Activated B cell treated with CpG ODN at 0.5 μM for 24 hours (primary cell): ENCODE measurements at regions of chr2 and their contacts with region 1.

Region 1: DNA sequence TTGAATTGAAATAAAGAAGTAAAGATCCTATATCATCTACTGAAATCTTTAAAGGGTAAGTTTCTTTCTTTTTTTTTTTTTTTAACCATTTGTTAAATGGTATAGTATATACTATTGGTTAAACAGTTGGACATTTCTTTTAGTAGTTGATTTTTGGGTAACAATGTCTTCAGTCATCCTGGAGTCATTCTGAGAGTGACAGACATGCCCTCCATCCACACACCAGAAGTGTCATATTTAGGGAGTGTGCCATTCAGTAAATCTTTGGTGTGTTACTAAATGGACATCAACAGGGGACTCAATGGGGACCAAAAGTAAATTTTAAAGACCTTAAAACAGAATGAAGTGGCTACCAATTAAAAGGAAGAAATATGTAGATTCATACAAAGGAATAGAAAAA is 50.8 kb upstream of the SLC39A10 start:
- DNase-seq: no peak
- ATAC-seq: no peak
- H3K4me3 Mint-ChIP-seq: no peak overlapping the region
- H3K27ac Mint-ChIP-seq: no peak overlapping the region
- H3K4me1 Mint-ChIP-seq: peaks cover 36% of the 10 kb centered on the region
- H3K27me3 Mint-ChIP-seq: no peaks in the 10 kb centered on the region
- CTCF ChIP-seq: no peak

Region 2: GRCh38 chr2:195586062-195586714 is 20.0 kb before region 1 on chr2:
- CTCF ChIA-PET with region 1: no interaction called
- POLR2A ChIA-PET with region 1: no interaction called
- intact Hi-C with region 1: loop called (anchors 2 kb)
- DNase-seq: no peak
- ATAC-seq: no peak
- H3K4me3 Mint-ChIP-seq: no peak overlapping the region
- H3K27ac Mint-ChIP-seq: no peak overlapping the region
- H3K4me1 Mint-ChIP-seq: peaks cover 1% of the 10 kb centered on the region
- H3K27me3 Mint-ChIP-seq: no peaks in the 10 kb centered on the region
- CTCF ChIP-seq: no peak

Region 3: DNA sequence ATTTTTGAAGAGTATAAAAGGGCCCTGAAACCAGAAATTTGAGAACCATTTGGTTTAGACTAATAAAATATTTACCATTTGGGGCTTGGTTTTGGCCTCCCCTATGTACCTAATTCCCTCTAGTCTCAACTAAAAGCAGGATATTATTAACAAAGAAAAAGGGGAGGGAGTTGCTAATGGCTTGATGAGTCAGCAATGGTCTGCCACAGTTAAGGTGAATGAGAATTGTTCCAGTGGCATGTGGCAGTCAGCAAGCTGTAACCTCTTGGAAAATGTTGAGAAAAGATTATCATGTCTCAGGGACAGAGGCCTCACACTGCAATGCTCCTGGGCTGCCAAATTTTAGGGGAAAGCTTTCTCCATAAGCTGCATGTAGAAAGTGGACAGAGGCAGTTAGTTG is 30.7 kb after region 1 on chr2:
- CTCF ChIA-PET with region 1: no interaction called
- POLR2A ChIA-PET with region 1: no interaction called
- intact Hi-C with region 1: no loop called
- DNase-seq: no peak
- ATAC-seq: no peak
- H3K4me3 Mint-ChIP-seq: no peak overlapping the region
- H3K27ac Mint-ChIP-seq: no peak overlapping the region
- H3K4me1 Mint-ChIP-seq: peaks cover 18% of the 10 kb centered on the region
- H3K27me3 Mint-ChIP-seq: no peaks in the 10 kb centered on the region
- CTCF ChIP-seq: no peak